OCI-LY7 (cell line): ENCODE measurements at regions of chr1 and their contacts with region 1.

Region 1: GRCh38 chr1:51235673-51236530 is at the start of gene RNF11:
- DNase-seq: peak; percentile 87
- H3K4me3 ChIP-seq: peak within 1 kb of the TSS; percentile 82
- H3K27ac ChIP-seq: no peak within 1 kb of the TSS
- H3K4me1 ChIP-seq: peaks cover 20% of the 10 kb centered on the region
- CTCF ChIP-seq: no peak
- total RNA-seq, gene RNF11: 4.8 and 5.7 TPM in 2 replicates

Region 2: DNA sequence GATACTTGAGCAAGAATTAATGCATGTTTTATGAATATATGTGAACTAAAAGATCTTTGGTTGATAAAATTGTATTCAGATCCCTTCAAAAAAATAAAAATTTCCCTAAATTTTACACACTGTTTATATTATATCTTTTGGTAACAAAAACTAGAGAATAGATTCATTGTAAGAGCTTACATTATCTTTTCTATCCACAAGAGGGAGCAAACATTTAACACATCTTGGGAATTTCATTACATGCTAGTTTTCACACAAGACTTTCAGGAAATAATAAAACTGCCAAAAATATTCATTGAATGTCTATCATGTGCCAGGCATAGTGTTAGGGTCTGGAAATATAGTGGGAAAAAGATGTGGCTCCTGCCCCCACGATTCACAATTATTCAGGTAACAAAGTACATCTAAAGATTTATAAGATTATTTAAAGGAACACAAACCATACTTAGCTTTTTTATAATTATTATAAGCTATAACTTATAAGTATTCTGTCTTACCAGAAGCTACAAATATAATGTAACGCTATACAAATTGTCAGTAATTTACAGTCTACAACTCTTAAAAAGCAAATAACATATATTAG is 306.4 kb before region 1 on chr1:
- CTCF ChIA-PET with region 1: no interaction called
- POLR2A ChIA-PET with region 1: no interaction called
- intact Hi-C with region 1: no loop called
- DNase-seq: peak; percentile 47
- H3K4me3 ChIP-seq: no peak overlapping the region
- H3K27ac ChIP-seq: no peak overlapping the region
- H3K4me1 ChIP-seq: peaks cover 6% of the 10 kb centered on the region
- CTCF ChIP-seq: peak; percentile 90

Region 3: DNA sequence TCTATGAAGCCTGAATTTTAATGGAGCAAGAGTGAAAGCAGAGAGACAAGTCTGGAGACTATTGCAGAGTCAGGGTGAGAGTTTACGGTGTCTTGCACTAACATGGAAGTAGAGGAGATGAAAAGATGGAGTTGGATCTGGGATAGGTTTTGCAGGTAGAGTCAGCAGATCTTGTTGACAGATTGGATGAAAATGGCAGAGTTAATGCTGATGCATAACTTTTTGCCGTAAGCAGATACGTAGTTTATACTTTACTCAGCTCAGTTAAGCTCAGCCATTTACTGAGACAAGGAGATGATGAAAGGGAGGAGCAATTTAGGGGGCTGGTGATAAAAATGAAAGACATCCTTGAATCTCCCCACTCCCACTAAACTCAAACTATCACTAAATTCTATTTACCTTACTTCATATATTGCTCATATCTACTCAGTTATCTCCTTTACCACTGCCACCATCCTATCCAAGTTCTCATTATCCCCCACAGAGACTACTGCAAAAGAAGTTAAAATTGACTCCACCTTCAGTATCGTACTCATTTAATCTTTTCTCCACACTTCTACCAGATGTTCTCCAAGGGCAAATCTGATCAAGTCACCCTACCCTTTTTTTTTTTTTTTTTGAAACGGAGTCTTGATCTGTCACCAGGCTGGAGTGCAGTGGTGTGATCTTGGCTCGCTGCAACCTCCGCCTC is 120.0 kb before region 1 on chr1:
- CTCF ChIA-PET with region 1: no interaction called
- POLR2A ChIA-PET with region 1: no interaction called
- intact Hi-C with region 1: no loop called
- DNase-seq: no peak
- H3K4me3 ChIP-seq: no peak overlapping the region
- H3K27ac ChIP-seq: no peak overlapping the region
- H3K4me1 ChIP-seq: no peaks in the 10 kb centered on the region
- CTCF ChIP-seq: no peak

Region 4: GRCh38 chr1:51284487-51284954 is 48.6 kb after region 1 on chr1:
- CTCF ChIA-PET with region 1: no interaction called
- POLR2A ChIA-PET with region 1: no interaction called
- intact Hi-C with region 1: no loop called
- DNase-seq: no peak
- H3K4me3 ChIP-seq: no peak overlapping the region
- H3K27ac ChIP-seq: no peak overlapping the region
- H3K4me1 ChIP-seq: no peaks in the 10 kb centered on the region
- CTCF ChIP-seq: no peak

Region 5: DNA sequence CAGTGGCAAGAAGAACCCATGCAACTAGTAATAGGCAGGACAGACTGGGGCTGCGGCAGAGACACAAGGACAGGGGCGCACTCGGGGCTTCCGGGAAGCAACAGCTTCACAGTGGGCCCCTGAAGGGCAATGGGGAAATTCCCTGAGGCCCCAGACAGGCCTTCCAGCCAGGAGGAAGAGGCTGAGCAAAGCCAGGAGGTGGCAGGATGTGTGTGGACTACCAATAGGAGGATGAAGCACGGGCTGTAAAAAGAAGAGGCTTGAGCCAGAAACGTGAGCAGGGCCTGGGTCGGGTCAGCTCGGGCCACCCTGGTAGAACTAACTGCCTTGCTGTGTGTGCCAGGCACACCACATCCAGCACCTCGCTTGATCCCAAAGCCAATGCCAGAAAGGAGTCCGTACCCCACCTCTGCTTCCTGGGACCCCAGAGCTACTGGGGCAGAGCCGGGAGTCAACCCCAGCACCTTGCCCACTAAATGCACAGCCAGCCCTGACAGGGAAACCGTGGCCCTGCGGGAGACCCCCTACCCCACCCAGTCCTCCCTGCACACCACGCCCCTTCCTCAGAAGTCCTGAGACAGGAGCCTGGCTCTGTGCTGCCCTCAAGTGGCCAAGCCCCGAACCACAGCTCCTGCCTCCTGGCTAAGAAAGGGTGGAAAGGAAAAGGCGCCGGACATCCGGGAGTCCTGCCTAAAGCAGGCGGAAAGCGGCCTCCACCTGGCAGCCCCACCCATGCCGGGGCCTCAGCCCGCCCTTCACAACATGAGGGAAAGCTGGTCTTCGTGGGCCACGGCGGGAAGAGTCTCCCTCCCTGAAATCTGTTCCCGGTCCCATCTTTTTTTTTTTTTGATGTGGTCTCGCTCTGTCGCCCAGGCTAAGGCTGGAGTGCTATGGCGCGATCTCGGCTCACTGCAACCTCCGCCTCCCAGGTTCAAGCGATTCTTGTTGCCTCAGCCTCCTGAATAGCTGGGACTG is 60.8 kb after region 1 on chr1:
- CTCF ChIA-PET with region 1: no interaction called
- POLR2A ChIA-PET with region 1: no interaction called
- intact Hi-C with region 1: loop called (anchors 2 kb)
- DNase-seq: peak; percentile 74
- H3K4me3 ChIP-seq: peak overlapping the region; percentile 40
- H3K27ac ChIP-seq: no peak overlapping the region
- H3K4me1 ChIP-seq: peaks cover 4% of the 10 kb centered on the region
- CTCF ChIP-seq: peak; percentile 91

Region 6: GRCh38 chr1:51313961-51314777 is 78.3 kb after region 1 on chr1:
- CTCF ChIA-PET with region 1: no interaction called
- POLR2A ChIA-PET with region 1: no interaction called
- intact Hi-C with region 1: no loop called
- DNase-seq: no peak
- H3K4me3 ChIP-seq: no peak overlapping the region
- H3K27ac ChIP-seq: no peak overlapping the region
- H3K4me1 ChIP-seq: no peaks in the 10 kb centered on the region
- CTCF ChIP-seq: no peak

Region 7: DNA sequence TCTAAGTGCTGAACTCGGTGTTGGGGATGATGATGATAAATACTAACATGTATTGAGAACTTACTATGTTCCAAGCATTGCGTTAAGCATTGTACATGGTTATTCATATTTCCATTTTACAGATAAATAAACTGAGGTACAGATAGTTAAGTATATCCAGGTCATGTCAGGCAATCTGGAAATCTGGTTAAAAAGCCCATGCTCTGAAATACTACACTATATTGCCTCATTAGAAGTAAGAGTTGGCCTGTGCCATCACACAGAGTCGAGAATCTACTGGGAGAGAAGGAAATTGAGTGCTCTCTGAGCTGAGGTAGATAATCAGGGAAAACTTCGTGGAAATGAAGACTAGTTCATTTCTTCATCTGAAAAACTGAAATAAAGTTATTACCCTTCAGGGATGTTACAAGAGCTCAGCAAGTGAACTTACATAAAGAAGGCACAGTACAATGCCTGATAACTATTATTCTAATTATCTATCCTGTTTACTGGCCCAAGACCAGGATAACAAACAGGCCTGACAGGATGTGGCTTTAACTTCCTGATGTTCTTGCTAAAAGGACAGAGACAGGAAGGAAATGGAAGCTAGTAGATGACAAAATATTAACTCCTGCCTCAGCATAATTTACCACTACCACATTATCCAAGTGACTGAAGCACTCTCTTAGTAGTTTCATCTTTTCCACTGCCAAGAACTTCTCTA is 197.5 kb after region 1 on chr1:
- CTCF ChIA-PET with region 1: no interaction called
- POLR2A ChIA-PET with region 1: no interaction called
- intact Hi-C with region 1: loop called (anchors 10 kb)
- DNase-seq: peak; percentile 33
- H3K4me3 ChIP-seq: no peak overlapping the region
- H3K27ac ChIP-seq: no peak overlapping the region
- H3K4me1 ChIP-seq: peaks cover 20% of the 10 kb centered on the region
- CTCF ChIP-seq: no peak